PC-9 (cell line): ENCODE measurements at regions of chr22 and their contacts with region 1.

Region 1: DNA sequence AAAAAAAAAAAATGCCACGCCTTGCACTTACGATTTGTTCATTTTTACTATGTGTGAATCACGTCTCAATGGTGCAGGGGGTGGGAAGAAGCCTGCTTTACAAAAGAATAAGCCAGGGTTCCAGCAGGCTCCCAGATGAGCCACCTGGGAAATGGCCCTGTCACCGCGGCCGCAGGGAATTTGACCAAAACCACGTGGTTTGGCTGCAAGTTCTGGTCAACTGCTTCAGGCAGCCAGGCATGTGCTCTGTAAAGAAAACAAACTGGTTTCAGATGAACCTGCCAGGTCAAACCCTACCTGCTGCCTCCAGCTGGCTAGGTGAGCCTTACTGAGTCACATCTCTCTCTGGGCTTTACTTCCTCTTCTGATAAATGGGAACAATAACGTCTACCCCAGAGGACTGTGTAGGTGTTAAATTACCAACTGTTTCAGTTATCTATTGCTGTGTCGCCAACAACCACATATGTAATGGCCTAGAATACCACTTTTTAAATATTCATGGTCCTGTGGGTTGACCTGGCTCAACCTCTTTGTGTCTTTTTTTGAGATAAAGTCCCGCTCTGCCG is 30.5 kb upstream of the GCAT start:
- DNase-seq: peak; percentile 96 to 100
- H3K4me3 ChIP-seq: no peak overlapping the region; the same call in 1 of the 2 replicates
- H3K27ac ChIP-seq: peak overlapping the region; percentile 91
- H3K4me1 ChIP-seq: peaks cover 38% of the 10 kb centered on the region
- H3K27me3 ChIP-seq: no peaks in the 10 kb centered on the region
- CTCF ChIP-seq: no peak

Region 2: DNA sequence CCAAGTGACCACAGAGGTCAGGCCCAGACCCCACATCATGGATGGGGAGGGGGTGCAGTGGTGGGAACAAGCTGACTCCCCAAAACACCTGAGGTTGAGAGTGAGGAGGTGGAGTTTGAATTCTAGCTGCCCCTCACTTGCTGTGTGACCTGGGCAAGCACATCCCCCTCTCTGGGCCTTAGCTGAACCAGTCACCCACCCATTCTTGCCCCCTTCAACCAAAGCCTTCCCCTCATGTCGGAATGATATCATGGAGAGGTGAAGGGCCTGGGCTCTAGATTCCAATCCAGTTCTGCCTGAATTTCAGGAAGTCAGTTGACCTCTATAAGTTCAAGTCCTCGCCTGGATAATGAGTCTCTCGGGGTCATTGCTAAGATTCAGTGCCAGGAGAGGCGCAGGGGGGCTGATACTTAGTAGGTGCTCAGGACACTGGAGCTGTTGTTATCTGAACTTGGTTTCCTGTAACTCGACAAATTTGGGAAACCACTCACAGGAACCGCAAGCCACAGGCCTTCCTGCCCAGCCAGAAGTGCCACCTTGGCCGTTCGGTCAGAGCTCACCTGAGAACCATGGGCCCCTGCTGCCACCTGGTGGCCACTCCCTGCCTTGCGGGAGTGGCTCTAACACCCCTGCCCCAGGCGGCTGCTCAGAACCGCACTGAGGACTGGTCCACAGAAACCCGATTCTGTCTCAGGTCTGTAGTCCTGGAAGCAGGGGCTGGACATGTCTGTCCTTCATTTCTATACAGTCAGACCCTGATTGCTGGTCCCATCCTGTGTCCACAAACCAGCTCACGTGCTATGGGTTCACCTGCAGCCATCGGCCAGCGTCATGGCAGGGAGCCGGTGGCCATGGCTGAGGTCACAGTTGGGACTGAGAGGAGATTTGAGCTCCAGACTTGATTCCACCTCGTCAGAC is 210.0 kb before region 1 on chr22:
- CTCF ChIA-PET with region 1: no interaction called
- POLR2A ChIA-PET with region 1: interaction called, 14 read pairs
- intact Hi-C with region 1: no loop called
- DNase-seq: peak; percentile 93 to 98
- H3K4me3 ChIP-seq: no peak overlapping the region
- H3K27ac ChIP-seq: peak overlapping the region; percentile 81
- H3K4me1 ChIP-seq: peaks cover 91% of the 10 kb centered on the region
- H3K27me3 ChIP-seq: no peaks in the 10 kb centered on the region
- CTCF ChIP-seq: peak; percentile 99